ENCODE measurements at regions of chr1 and their contacts with region 1.

Region 1: DNA sequence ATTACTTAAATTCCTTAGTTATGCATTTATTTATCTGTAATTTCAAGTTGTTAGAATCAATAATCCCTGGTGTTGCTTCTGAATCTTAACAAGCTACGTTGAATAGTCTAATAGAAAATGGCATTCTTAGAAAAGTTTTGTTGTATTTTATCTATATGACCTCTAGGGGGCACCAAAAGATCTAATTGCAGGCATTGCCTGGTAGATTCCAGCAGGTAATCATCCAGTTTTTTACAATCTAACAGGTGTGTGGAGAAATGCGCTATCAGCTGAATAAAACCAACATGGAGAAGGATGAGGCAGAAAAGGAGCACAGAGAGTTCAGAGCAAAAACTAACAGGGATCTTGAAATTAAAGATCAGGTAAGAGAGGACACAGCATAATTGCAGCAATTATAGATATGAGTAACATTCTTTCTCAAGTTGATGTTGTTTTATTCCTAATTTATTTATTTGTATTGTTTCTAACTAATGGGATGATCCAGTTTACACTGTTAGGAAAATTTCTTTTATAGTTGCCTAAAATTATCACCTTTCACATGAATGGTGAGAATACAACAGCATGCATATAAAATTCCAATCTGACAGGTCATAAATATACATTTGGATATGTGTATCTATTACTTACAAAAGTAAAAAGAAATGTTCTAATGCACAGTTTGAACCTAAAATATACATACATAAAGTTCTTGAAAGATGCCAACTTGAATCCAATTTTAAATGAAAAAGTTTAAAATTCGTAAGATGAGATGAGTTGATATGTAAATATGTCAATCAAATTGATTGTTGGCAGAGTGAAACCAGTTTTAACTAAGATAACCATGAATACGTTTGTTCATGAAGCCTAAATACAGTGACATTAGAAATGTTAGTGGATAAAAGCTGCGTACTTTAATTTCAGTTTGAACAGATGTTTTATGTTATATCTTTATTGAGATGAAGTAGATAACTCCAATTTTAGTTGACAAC is 88.4 kb downstream of the SDCCAG8 start:
- DNase-seq: no peak
- ATAC-seq: peak; percentile 63
- H3K4me3 Mint-ChIP-seq: no peak overlapping the region
- H3K27ac Mint-ChIP-seq: no peak overlapping the region
- H3K4me1 Mint-ChIP-seq: peaks cover 15% of the 10 kb centered on the region
- H3K27me3 Mint-ChIP-seq: no peaks in the 10 kb centered on the region

Region 2: GRCh38 chr1:243294723-243295121 is 49.5 kb before region 1 on chr1:
- CTCF ChIA-PET with region 1: no interaction called
- DNase-seq: no peak
- ATAC-seq: no peak
- H3K4me3 Mint-ChIP-seq: no peak overlapping the region
- H3K27ac Mint-ChIP-seq: no peak overlapping the region
- H3K4me1 Mint-ChIP-seq: no peaks in the 10 kb centered on the region
- H3K27me3 Mint-ChIP-seq: no peaks in the 10 kb centered on the region

Region 3: DNA sequence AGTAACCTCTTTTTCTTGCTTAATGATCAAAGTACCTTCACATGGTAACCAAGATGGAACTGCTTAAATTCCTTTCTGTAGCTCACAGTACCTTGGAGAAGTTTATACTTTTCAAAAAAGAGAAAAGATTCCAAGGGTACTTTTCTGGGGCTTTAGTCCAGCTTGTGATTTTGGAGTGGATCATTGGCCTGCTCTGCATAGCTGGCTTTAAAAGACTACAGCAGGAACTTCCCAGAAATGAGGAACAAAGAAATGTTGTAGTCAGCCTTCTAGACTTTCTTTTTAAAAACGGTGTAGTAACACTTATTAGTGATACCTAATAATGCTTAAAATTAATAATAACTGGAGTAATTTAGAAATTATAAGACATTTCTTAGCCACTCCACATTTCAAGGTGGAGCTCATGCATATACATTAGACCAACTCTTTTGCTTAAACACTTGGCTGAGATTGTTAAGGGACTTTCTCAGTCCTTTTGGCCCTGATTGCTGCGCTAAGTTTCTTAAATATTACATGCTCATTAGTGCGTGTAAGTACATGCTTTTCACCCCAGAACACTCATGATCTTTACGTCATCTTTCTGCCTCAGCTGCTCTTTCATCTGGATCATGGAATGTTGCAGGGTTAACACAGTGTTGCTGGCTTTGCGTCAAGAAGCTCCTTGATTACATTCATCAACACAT is 31.2 kb before region 1 on chr1:
- CTCF ChIA-PET with region 1: no interaction called
- DNase-seq: no peak
- ATAC-seq: no peak
- H3K4me3 Mint-ChIP-seq: no peak overlapping the region
- H3K27ac Mint-ChIP-seq: no peak overlapping the region
- H3K4me1 Mint-ChIP-seq: peaks cover 10% of the 10 kb centered on the region
- H3K27me3 Mint-ChIP-seq: no peaks in the 10 kb centered on the region

Region 4: DNA sequence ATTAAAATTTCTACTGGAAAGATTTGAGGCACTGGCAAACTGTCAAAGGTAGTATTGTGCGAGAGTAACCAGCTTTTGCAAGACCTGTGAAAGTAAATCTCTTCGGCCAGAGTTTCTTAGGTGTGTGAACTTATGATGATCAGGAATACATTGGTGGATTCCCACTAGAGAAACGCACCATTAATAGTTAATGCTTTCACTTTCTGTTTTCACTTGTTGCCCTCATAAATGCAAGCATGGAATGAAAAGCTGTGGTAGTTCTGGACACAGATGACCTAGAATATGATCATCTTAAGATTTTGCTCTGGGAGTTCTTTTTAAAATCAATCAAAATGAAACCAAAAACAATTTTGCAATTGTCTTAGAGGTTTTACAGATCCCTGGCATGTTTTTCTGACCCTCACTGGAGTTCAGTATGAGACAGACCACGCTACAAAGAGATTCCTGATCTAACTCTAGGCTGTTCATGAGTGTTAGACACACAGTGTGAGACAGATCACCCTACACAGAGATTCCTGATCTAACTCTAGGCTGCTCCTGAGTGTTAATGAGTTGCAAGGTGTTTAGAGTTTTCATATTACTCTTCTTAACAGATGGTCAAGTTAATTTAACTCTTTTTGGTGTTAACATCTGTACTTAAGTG is 10.4 kb after region 1 on chr1:
- CTCF ChIA-PET with region 1: interaction called, 15 read pairs
- DNase-seq: no peak
- ATAC-seq: peak; percentile 68
- H3K4me3 Mint-ChIP-seq: peak overlapping the region; percentile 63
- H3K27ac Mint-ChIP-seq: peak overlapping the region; percentile 66
- H3K4me1 Mint-ChIP-seq: peaks cover 16% of the 10 kb centered on the region
- H3K27me3 Mint-ChIP-seq: no peaks in the 10 kb centered on the region

Region 5: GRCh38 chr1:243409284-243409683 is 65.0 kb after region 1 on chr1:
- CTCF ChIA-PET with region 1: interaction called, 18 read pairs
- DNase-seq: no peak
- ATAC-seq: peak; percentile 33
- H3K4me3 Mint-ChIP-seq: no peak overlapping the region
- H3K27ac Mint-ChIP-seq: no peak overlapping the region
- H3K4me1 Mint-ChIP-seq: peaks cover 18% of the 10 kb centered on the region
- H3K27me3 Mint-ChIP-seq: no peaks in the 10 kb centered on the region

Region 6: GRCh38 chr1:243433737-243434370 is 89.6 kb after region 1 on chr1:
- CTCF ChIA-PET with region 1: no interaction called
- DNase-seq: no peak
- ATAC-seq: peak; percentile 64
- H3K4me3 Mint-ChIP-seq: no peak overlapping the region
- H3K27ac Mint-ChIP-seq: no peak overlapping the region
- H3K4me1 Mint-ChIP-seq: peaks cover 13% of the 10 kb centered on the region
- H3K27me3 Mint-ChIP-seq: no peaks in the 10 kb centered on the region

Region 7: GRCh38 chr1:243751506-243751905 is 407.3 kb after region 1 on chr1:
- CTCF ChIA-PET with region 1: interaction called, 16 read pairs
- DNase-seq: no peak
- ATAC-seq: no peak
- H3K4me3 Mint-ChIP-seq: no peak overlapping the region
- H3K27ac Mint-ChIP-seq: no peak overlapping the region
- H3K4me1 Mint-ChIP-seq: peaks cover 1% of the 10 kb centered on the region
- H3K27me3 Mint-ChIP-seq: no peaks in the 10 kb centered on the region

Region 8: DNA sequence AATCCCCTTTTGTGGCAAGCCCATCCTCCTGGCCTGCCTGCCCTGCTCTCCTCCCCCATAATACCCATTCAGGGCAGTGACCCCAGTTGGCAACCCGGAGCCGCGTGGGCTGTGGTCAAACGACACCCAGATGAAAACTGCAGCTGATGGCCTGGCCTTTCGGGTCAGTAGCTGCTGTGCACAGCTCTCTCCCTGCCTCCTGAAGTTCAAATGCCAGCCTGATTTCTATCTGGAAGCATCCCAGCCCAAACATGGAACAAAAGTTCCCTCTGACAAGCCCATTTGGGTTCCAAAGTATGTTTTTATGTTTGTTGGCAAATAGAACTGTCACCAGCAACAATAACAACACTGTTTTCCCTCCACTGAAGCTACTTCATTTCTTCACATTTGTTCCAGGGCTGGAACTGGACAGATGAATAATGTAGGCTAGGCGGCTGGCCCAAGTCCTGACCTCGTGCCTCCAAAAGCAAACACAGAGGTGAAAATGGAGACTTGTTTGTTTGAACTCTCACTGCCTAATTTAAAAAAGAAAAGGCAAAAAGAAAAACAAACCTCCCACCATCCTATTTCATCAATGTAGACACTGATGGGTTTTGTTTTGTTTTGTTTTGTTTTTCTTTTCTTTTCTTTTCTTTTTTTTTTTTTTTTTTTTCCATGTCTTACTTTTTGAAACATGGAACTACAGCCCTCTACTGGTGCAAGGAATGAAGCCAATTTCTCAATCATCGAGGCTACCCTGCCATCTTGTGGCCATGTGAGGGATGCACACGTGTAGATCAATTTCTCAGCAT is 928.4 kb after region 1 on chr1:
- CTCF ChIA-PET with region 1: interaction called, 12 read pairs
- DNase-seq: peak; percentile 79
- ATAC-seq: peak; percentile 86
- H3K4me3 Mint-ChIP-seq: no peak overlapping the region
- H3K27ac Mint-ChIP-seq: peak overlapping the region; percentile 39
- H3K4me1 Mint-ChIP-seq: peaks cover 14% of the 10 kb centered on the region
- H3K27me3 Mint-ChIP-seq: peaks cover 3% of the 10 kb centered on the region

Measured in activated CD8-positive, alpha-beta memory T cell treated with anti-CD3 and anti-CD28 coated beads, Interleukin-2, amount 10 ng/mL, durations not matched to agents 7 days and 5 days (primary cell).